ENCODE measurements at regions of chr1 and their contacts with region 1.

Region 1: DNA sequence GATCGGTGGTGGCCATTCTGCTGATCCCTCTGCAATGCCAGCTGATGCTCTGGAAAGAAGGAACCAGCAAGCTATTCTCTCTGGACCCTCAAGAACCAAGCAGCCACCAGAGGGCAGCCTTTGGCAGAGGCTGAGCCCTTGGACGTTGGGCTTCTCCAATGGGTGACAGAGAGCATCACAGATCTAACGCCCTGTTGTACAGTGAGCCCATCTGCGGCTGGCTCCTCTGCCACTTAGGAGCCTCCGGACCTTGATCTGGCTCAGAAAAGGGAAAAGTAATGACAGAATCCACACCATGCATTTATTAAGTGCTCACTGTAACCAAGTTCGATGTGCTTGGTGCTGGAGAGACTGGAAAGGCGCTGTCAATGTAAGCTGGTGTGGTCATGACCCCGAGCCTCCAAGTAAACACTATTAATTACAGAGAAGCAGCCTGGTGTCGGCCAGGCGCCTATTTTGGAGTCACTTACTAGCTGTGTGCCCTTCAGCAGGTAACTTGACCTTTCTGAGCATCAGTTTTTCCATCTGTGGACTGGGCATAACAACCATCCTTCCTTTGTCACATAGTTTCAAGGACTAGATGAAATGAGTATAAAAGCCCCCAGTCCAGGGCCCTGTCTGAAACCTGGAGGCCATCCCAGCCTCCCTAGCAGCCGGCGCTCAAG is 34.9 kb downstream of the ECE1 start:
- DNase-seq: peak; percentile 83 to 90 (median 87)
- H3K4me3 ChIP-seq: no peak overlapping the region
- H3K27ac ChIP-seq: no peak overlapping the region
- H3K4me1 ChIP-seq: peaks cover 0 to 12% (median 9%) of the 10 kb centered on the region in 4 experiments
- H3K27me3 ChIP-seq: no peaks in the 10 kb centered on the region

Region 2: GRCh38 chr1:21244986-21245687 is 10.3 kb before region 1 on chr1:
- CTCF ChIA-PET with region 1: interaction called, 18 read pairs
- POLR2A ChIA-PET with region 1: no interaction called
- DNase-seq: no peak
- H3K4me3 ChIP-seq: no peak overlapping the region
- H3K27ac ChIP-seq: no peak overlapping the region
- H3K4me1 ChIP-seq: no peaks in the 10 kb centered on the region
- H3K27me3 ChIP-seq: no peaks in the 10 kb centered on the region

Region 3: GRCh38 chr1:21280011-21280471 is 24.6 kb after region 1 on chr1:
- CTCF ChIA-PET with region 1: interaction called, 131 read pairs
- POLR2A ChIA-PET with region 1: interaction called, 9 read pairs
- DNase-seq: peak in 1 of 3 donors; percentile 27
- H3K4me3 ChIP-seq: peak overlapping the region in 1 of 7 experiments; percentile 1
- H3K27ac ChIP-seq: no peak overlapping the region
- H3K4me1 ChIP-seq: peaks cover 0 to 21% (median 14%) of the 10 kb centered on the region in 4 experiments
- H3K27me3 ChIP-seq: peaks cover 0 to 2% (median 0%) of the 10 kb centered on the region in 5 experiments

Region 4: DNA sequence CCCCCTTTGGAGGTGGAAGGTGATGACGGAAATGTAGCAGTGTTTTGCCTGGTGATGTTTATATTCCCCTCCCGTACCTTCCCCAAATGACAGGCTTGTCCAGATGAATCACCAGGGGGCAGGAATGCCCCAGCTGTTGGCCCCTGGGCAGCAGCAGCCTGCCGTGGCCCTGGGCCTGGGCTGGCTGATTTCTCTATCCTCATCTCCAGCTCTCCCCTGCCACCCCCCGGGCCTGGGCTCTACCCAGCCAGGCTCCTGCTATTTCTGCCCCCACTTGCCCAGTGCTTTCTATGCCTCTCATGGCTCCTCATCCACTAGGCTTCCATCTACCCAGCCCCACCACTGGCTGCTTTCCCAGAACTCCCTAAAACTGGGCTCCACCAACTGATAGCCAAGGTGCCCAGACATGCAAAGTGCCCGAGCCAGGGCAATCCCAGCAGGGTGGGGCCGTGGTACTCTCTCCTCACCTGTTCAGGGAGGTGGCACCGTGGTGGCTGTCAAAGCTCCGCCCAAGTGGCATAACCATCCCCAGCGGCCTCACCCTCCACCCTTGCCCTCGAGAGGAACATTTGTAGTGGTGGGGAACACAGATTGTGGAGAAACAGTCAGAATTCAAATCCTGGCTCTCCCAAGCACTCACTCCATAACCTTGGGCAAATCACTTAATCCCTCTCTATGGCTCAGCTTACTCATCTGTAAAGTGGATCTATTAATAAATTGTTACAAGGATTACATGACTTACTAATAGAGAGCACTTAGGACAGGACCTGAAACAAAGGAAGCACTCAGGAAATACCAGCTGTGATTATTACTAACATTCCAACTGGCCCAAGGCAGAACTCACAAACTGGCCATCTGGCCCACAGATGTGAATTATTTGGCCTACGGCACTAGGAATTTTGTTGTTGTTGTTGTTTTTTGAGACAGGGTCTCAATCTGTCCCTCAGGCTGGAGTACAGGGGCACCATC is 47.6 kb after region 1 on chr1:
- CTCF ChIA-PET with region 1: interaction called, 10 read pairs
- POLR2A ChIA-PET with region 1: no interaction called
- DNase-seq: peak in 2 of 3 donors; percentile 33 to 40
- H3K4me3 ChIP-seq: no peak overlapping the region
- H3K27ac ChIP-seq: no peak overlapping the region
- H3K4me1 ChIP-seq: peaks cover 3 to 10% (median 8%) of the 10 kb centered on the region in 4 experiments
- H3K27me3 ChIP-seq: no peaks in the 10 kb centered on the region

Region 5: GRCh38 chr1:21334214-21335087 is 79.0 kb after region 1 on chr1:
- CTCF ChIA-PET with region 1: interaction called, 21 read pairs
- POLR2A ChIA-PET with region 1: interaction called, 3 read pairs
- DNase-seq: peak; percentile 99 to 100 (median 100)
- H3K4me3 ChIP-seq: peak overlapping the region; percentile 11 to 84 (median 56)
- H3K27ac ChIP-seq: peak overlapping the region; percentile 56
- H3K4me1 ChIP-seq: peaks cover 20 to 72% (median 64%) of the 10 kb centered on the region in 4 experiments
- H3K27me3 ChIP-seq: peaks cover 0 to 4% (median 0%) of the 10 kb centered on the region in 5 experiments